B cell (primary cell): ENCODE measurements at regions of chr2 and their contacts with region 1.

Region 1: DNA sequence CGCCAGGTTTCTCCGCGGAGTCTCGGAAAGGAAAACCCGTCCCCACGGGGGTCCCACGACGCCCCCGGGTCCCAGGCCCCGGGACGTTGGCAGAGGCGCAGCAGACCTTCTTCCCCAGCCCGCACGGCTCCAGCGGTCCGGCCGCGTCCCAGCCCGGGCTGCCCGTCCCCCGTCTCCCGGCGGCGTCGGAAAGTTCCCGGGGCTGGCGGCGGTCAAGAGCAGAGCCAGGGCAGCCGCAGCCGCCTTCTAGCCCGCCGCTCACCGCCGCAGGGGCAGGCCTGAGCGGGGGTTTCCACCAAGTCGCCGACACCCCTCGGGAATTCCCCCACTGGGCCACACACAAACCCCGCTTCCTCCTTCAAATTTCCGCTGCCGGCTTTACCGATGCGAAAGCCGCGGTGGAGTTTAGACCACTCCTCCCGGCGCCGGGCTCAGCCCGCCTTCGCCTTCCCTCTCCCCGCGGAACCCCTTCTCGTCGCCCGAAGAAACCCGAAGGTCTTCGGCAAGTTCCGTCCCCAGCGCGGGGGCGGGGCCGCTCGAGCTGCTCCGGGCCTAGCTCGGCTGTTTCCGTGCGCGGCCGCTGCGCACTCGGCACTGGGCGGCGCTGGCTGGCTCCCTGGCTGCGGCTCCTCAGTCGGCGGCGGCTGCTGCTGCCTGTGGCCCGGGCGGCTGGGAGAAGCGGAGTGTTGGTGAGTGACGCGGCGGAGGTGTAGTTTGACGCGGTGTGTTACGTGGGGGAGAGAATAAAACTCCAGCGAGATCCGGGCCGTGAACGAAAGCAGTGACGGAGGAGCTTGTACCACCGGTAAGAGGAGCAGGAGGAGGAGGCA is at the start of gene CREB1:
- DNase-seq: peak; percentile 100
- ATAC-seq: peak; percentile 77
- H3K4me3 ChIP-seq: peak within 1 kb of the TSS; percentile 89 to 98 (median 97)
- H3K4me3 Mint-ChIP-seq: peak within 1 kb of the TSS; percentile 93
- H3K27ac ChIP-seq: peak within 1 kb of the TSS; percentile 100
- H3K27ac Mint-ChIP-seq: peak within 1 kb of the TSS; percentile 98
- H3K4me1 ChIP-seq: peaks cover 70 to 73% of the 10 kb centered on the region in 2 donors
- H3K4me1 Mint-ChIP-seq: peaks cover 68% of the 10 kb centered on the region
- H3K27me3 ChIP-seq: no peaks in the 10 kb centered on the region
- H3K27me3 Mint-ChIP-seq: no peaks in the 10 kb centered on the region
- CTCF ChIP-seq: no peak
- total RNA-seq, gene CREB1: 149 and 156 TPM in 2 replicates

Region 2: DNA sequence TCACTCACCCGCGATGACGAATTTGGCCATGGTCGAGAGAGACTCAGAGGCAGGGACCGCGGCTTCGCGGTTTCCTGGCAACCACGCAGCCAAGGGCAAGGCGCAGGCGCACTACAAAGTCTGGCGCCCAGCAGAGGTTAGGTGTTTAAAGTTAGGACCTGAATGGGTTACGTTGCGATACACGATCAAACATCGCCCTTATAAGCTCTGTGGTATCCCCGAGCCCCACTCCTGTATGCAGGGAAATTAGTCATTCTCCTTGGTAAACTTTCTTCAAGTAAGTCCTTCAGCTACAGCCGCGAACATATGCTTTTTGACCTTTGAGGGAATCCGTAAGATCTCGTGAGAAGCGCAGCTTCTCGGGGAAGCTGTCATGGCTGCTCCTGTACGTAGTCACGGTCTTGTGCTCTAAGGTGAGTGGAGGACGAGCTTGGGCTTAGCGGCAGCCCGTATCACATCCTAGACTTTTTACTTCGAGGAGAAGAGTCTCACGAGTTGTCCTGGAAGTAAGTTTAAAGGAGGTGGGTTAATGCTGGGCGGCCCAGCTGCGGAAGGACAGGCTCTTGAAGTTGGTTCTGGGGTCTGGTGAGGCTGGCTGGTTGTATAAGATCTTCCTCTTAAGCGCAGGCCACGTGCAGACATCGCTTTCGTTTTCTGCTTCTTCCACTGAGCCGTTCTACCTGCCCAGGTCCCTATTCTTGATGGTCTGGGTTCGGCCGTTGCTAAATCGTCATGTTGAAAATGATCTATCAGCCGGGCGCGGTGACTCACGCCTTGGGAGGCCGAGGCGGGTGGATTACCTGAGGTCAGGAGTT is 764.1 kb before region 1 on chr2 and contains the starts of genes FASTKD2 and MDH1B:
- CTCF ChIA-PET with region 1: interaction called, 3 read pairs
- POLR2A ChIA-PET with region 1: interaction called, 3 read pairs
- intact Hi-C with region 1: loop called (anchors 1 kb)
- DNase-seq: peak; percentile 96
- ATAC-seq: peak; percentile 85
- H3K4me3 ChIP-seq: peak within 1 kb of the TSS; percentile 63 to 96 (median 87)
- H3K4me3 Mint-ChIP-seq: peak within 1 kb of the TSS; percentile 99
- H3K27ac ChIP-seq: peak within 1 kb of the TSS; percentile 77 to 92
- H3K27ac Mint-ChIP-seq: peak within 1 kb of the TSS; percentile 97
- H3K4me1 ChIP-seq: peaks cover 14% of the 10 kb centered on the region in 2 donors
- H3K4me1 Mint-ChIP-seq: peaks cover 32% of the 10 kb centered on the region
- H3K27me3 ChIP-seq: peaks cover 0 to 17% (median 6%) of the 10 kb centered on the region in 4 experiments
- H3K27me3 Mint-ChIP-seq: no peaks in the 10 kb centered on the region
- CTCF ChIP-seq: no peak
- total RNA-seq, gene FASTKD2: 20.6 and 24.5 TPM in 2 replicates
- total RNA-seq, gene MDH1B: 0.34 TPM in 1 of 2 replicates, not detected in the other

Region 3: GRCh38 chr2:207008105-207008990 is 521.2 kb before region 1 on chr2:
- CTCF ChIA-PET with region 1: no interaction called
- POLR2A ChIA-PET with region 1: no interaction called
- intact Hi-C with region 1: no loop called
- DNase-seq: peak; percentile 10
- ATAC-seq: no peak
- H3K4me3 ChIP-seq: no peak overlapping the region
- H3K4me3 Mint-ChIP-seq: no peak overlapping the region
- H3K27ac ChIP-seq: no peak overlapping the region
- H3K27ac Mint-ChIP-seq: no peak overlapping the region
- H3K4me1 ChIP-seq: no peaks in the 10 kb centered on the region
- H3K4me1 Mint-ChIP-seq: no peaks in the 10 kb centered on the region
- H3K27me3 ChIP-seq: no peaks in the 10 kb centered on the region
- H3K27me3 Mint-ChIP-seq: peaks cover 9% of the 10 kb centered on the region
- CTCF ChIP-seq: peak; percentile 50

Region 4: GRCh38 chr2:207448006-207448405 is 81.5 kb before region 1 on chr2:
- CTCF ChIA-PET with region 1: no interaction called
- POLR2A ChIA-PET with region 1: no interaction called
- intact Hi-C with region 1: no loop called
- DNase-seq: no peak
- ATAC-seq: no peak
- H3K4me3 ChIP-seq: no peak overlapping the region
- H3K4me3 Mint-ChIP-seq: no peak overlapping the region
- H3K27ac ChIP-seq: no peak overlapping the region
- H3K27ac Mint-ChIP-seq: no peak overlapping the region
- H3K4me1 ChIP-seq: no peaks in the 10 kb centered on the region
- H3K4me1 Mint-ChIP-seq: no peaks in the 10 kb centered on the region
- H3K27me3 ChIP-seq: no peaks in the 10 kb centered on the region
- H3K27me3 Mint-ChIP-seq: peaks cover 5% of the 10 kb centered on the region
- CTCF ChIP-seq: no peak

Region 5: DNA sequence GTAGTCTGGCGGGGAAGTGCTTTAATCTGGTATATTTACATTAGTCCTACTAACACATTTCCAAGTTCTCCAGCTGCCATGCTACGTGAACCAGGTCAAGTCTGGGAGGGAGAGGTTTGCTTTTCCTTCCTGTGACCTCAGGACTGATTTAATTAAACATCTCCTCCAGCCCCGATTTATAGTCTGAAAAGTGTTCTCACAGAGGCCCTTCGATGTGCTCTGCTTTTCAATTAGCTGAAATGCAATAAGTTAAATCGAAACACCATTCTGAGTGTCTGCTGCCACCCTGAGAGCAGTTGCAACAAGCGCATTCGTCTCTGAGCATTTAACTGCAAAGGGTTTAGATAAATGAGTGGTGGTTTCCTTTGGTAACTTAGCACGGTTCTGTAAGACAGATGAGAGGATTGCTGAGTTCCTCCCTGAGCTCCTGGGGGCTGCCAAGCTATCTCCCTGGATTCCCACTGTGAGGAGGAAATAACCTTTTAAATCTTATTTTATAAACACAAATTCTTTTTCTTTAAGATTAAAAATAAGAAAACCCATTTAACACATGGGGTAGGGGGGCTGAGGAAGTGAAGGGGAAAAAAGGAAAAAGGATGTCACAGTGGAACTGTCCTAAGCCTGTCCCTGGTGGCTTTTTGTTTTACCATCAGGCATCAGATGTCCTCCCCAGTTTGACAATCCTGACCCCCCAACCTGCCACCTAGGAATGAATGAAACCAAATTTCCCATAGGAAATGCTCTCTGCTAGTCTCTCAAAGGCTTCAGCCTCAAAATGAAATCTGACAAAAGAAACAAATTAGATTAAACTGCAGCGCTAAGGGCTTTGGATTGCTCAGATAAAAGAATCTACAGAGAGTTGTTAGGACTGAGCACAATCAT is 56.3 kb before region 1 on chr2:
- CTCF ChIA-PET with region 1: interaction called, 3 read pairs
- POLR2A ChIA-PET with region 1: no interaction called
- intact Hi-C with region 1: loop called (anchors 2 kb)
- DNase-seq: peak; percentile 28
- ATAC-seq: no peak
- H3K4me3 ChIP-seq: no peak overlapping the region
- H3K4me3 Mint-ChIP-seq: no peak overlapping the region
- H3K27ac ChIP-seq: no peak overlapping the region
- H3K27ac Mint-ChIP-seq: no peak overlapping the region
- H3K4me1 ChIP-seq: peaks cover 3 to 5% of the 10 kb centered on the region in 2 donors
- H3K4me1 Mint-ChIP-seq: peaks cover 7% of the 10 kb centered on the region
- H3K27me3 ChIP-seq: no peaks in the 10 kb centered on the region
- H3K27me3 Mint-ChIP-seq: no peaks in the 10 kb centered on the region
- CTCF ChIP-seq: no peak

Region 6: GRCh38 chr2:207549145-207549544 is 19.6 kb after region 1 on chr2:
- CTCF ChIA-PET with region 1: interaction called, 3 read pairs
- POLR2A ChIA-PET with region 1: interaction called, 3 read pairs
- intact Hi-C with region 1: loop called (anchors 2 kb)
- DNase-seq: no peak
- ATAC-seq: no peak
- H3K4me3 ChIP-seq: no peak overlapping the region
- H3K4me3 Mint-ChIP-seq: no peak overlapping the region
- H3K27ac ChIP-seq: no peak overlapping the region
- H3K27ac Mint-ChIP-seq: no peak overlapping the region
- H3K4me1 ChIP-seq: peaks cover 3 to 9% of the 10 kb centered on the region in 2 donors
- H3K4me1 Mint-ChIP-seq: peaks cover 54% of the 10 kb centered on the region
- H3K27me3 ChIP-seq: no peaks in the 10 kb centered on the region
- H3K27me3 Mint-ChIP-seq: no peaks in the 10 kb centered on the region
- CTCF ChIP-seq: no peak

Region 7: GRCh38 chr2:207603486-207603885 is 73.9 kb after region 1 on chr2:
- CTCF ChIA-PET with region 1: no interaction called
- POLR2A ChIA-PET with region 1: no interaction called
- intact Hi-C with region 1: no loop called
- DNase-seq: no peak
- ATAC-seq: no peak
- H3K4me3 ChIP-seq: no peak overlapping the region
- H3K4me3 Mint-ChIP-seq: no peak overlapping the region
- H3K27ac ChIP-seq: peak overlapping the region in 1 of 2 donors; percentile 55
- H3K27ac Mint-ChIP-seq: no peak overlapping the region
- H3K4me1 ChIP-seq: peaks cover 0 to 3% of the 10 kb centered on the region in 2 donors
- H3K4me1 Mint-ChIP-seq: peaks cover 20% of the 10 kb centered on the region
- H3K27me3 ChIP-seq: no peaks in the 10 kb centered on the region
- H3K27me3 Mint-ChIP-seq: no peaks in the 10 kb centered on the region
- CTCF ChIP-seq: no peak

Region 8: GRCh38 chr2:207655000-207655399 is 125.5 kb after region 1 on chr2:
- CTCF ChIA-PET with region 1: no interaction called
- POLR2A ChIA-PET with region 1: no interaction called
- intact Hi-C with region 1: no loop called
- DNase-seq: no peak
- ATAC-seq: no peak
- H3K4me3 ChIP-seq: no peak overlapping the region
- H3K4me3 Mint-ChIP-seq: no peak overlapping the region
- H3K27ac ChIP-seq: no peak overlapping the region
- H3K27ac Mint-ChIP-seq: no peak overlapping the region
- H3K4me1 ChIP-seq: peaks cover 0 to 4% of the 10 kb centered on the region in 2 donors
- H3K4me1 Mint-ChIP-seq: peaks cover 11% of the 10 kb centered on the region
- H3K27me3 ChIP-seq: no peaks in the 10 kb centered on the region
- H3K27me3 Mint-ChIP-seq: no peaks in the 10 kb centered on the region
- CTCF ChIP-seq: no peak

Region 9: DNA sequence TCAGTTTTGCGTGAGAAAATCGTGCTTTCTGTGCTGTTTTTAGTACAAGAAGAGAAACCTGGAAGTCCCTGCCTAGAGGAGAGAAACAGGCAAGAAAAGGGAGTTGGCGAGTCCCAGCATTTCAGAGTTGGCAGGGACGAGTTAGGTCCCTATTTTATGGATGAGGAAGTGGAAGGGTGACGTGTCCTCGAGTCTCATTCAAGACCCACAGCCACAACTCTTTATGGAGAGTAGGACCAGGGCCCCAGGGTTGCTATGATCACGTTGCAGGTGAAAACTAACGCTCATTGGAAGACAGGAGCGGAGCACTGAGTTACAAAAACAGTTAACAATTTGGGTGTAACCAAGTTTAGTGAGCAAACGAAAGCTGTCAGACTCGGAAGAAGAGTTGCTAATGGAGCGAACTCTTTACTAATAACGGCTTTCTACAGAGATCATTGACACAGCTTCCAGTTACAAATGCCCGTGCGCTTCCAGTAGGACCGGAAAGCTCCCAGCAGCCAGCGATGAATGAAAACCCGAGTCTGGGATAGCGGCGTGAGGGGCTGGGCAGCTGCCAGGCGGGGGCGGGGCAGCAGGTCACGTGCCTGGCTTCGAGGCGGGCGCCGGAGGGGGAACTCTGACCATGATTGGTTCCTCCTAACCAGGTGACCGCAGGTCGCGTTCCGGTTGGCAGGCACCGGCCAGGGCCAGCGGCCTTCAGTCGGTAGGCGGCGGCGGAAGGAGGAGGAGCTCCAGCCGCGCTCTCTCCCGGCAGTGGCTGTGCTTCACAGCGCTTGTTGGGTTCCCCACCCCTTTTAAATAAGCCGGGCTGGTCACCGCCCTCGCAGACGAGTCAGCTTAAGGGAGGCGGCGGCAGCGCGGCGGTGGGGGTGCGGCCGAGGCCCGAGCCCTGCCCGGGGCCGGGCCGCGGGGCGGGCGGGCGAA is 181.5 kb after region 1 on chr2 and contains the start of gene CCNYL1:
- CTCF ChIA-PET with region 1: interaction called, 3 read pairs
- POLR2A ChIA-PET with region 1: interaction called, 9 read pairs
- intact Hi-C with region 1: loop called (anchors 1 kb)
- DNase-seq: peak; percentile 99
- ATAC-seq: peak; percentile 94
- H3K4me3 ChIP-seq: peak within 1 kb of the TSS; percentile 81 to 98 (median 93)
- H3K4me3 Mint-ChIP-seq: peak within 1 kb of the TSS; percentile 91
- H3K27ac ChIP-seq: peak within 1 kb of the TSS; percentile 78 to 83
- H3K27ac Mint-ChIP-seq: peak within 1 kb of the TSS; percentile 88
- H3K4me1 ChIP-seq: peaks cover 17 to 19% of the 10 kb centered on the region in 2 donors
- H3K4me1 Mint-ChIP-seq: peaks cover 23% of the 10 kb centered on the region
- H3K27me3 ChIP-seq: no peaks in the 10 kb centered on the region
- H3K27me3 Mint-ChIP-seq: no peaks in the 10 kb centered on the region
- CTCF ChIP-seq: no peak
- total RNA-seq, gene CCNYL1: 14.2 and 15.1 TPM in 2 replicates

Region 10: GRCh38 chr2:208265801-208266552 is 736.4 kb after region 1 on chr2 and contains the start of gene PIKFYVE:
- CTCF ChIA-PET with region 1: interaction called, 3 read pairs
- POLR2A ChIA-PET with region 1: interaction called, 3 read pairs
- intact Hi-C with region 1: loop called (anchors 1 kb)
- DNase-seq: peak; percentile 96
- ATAC-seq: peak; percentile 87
- H3K4me3 ChIP-seq: peak within 1 kb of the TSS; percentile 61 to 98 (median 76)
- H3K4me3 Mint-ChIP-seq: peak within 1 kb of the TSS; percentile 95
- H3K27ac ChIP-seq: peak within 1 kb of the TSS; percentile 85 to 89
- H3K27ac Mint-ChIP-seq: peak within 1 kb of the TSS; percentile 99
- H3K4me1 ChIP-seq: peaks cover 34 to 42% of the 10 kb centered on the region in 2 donors
- H3K4me1 Mint-ChIP-seq: peaks cover 44% of the 10 kb centered on the region
- H3K27me3 ChIP-seq: no peaks in the 10 kb centered on the region
- H3K27me3 Mint-ChIP-seq: no peaks in the 10 kb centered on the region
- CTCF ChIP-seq: no peak
- total RNA-seq, gene PIKFYVE: 79.3 and 80.9 TPM in 2 replicates